ENCODE measurements at regions of chr11 and their contacts with region 1.

Region 1: GRCh38 chr11:7657306-7658025 is 15.8 kb downstream of the CYB5R2 start:
- DNase-seq: no peak
- ATAC-seq: peak; percentile 95
- H3K4me3 ChIP-seq: no peak overlapping the region
- H3K27ac ChIP-seq: no peak overlapping the region
- H3K4me1 ChIP-seq: no peaks in the 10 kb centered on the region
- H3K27me3 ChIP-seq: no peaks in the 10 kb centered on the region
- CTCF ChIP-seq: peak; percentile 48

Region 2: GRCh38 chr11:7513234-7514098 is 144.0 kb before region 1 on chr11 and contains the start of gene PPFIBP2:
- CTCF ChIA-PET with region 1: interaction called, 8 read pairs
- POLR2A ChIA-PET with region 1: no interaction called
- in situ Hi-C with region 1: no loop called
- intact Hi-C with region 1: loop called (anchors 2 kb)
- DNase-seq: peak; percentile 48
- ATAC-seq: peak; percentile 96
- H3K4me3 ChIP-seq: peak within 1 kb of the TSS; percentile 80 to 96
- H3K27ac ChIP-seq: peak within 1 kb of the TSS; percentile 80
- H3K4me1 ChIP-seq: peaks cover 17% of the 10 kb centered on the region
- H3K27me3 ChIP-seq: peaks cover 6% of the 10 kb centered on the region; the same call in 1 of the 2 replicates
- CTCF ChIP-seq: peak; percentile 96
- total RNA-seq, gene PPFIBP2: 21.5 TPM

Region 3: GRCh38 chr11:7571640-7572000 is 85.8 kb before region 1 on chr11:
- CTCF ChIA-PET with region 1: interaction called, 20 read pairs
- POLR2A ChIA-PET with region 1: no interaction called
- in situ Hi-C with region 1: no loop called
- intact Hi-C with region 1: no loop called
- DNase-seq: peak; percentile 47
- ATAC-seq: peak; percentile 92
- H3K4me3 ChIP-seq: no peak overlapping the region
- H3K27ac ChIP-seq: no peak overlapping the region
- H3K4me1 ChIP-seq: peaks cover 8% of the 10 kb centered on the region; the same call in 1 of the 2 replicates
- H3K27me3 ChIP-seq: no peaks in the 10 kb centered on the region
- CTCF ChIP-seq: peak; percentile 99

Region 4: GRCh38 chr11:7714786-7715185 is 57.3 kb after region 1 on chr11:
- CTCF ChIA-PET with region 1: no interaction called
- POLR2A ChIA-PET with region 1: no interaction called
- in situ Hi-C with region 1: no loop called
- intact Hi-C with region 1: no loop called
- DNase-seq: no peak
- ATAC-seq: no peak
- H3K4me3 ChIP-seq: no peak overlapping the region
- H3K27ac ChIP-seq: no peak overlapping the region
- H3K4me1 ChIP-seq: no peaks in the 10 kb centered on the region
- H3K27me3 ChIP-seq: peaks cover 15% of the 10 kb centered on the region
- CTCF ChIP-seq: no peak